ENCODE measurements at regions of chr4 and their contacts with region 1.

Region 1: DNA sequence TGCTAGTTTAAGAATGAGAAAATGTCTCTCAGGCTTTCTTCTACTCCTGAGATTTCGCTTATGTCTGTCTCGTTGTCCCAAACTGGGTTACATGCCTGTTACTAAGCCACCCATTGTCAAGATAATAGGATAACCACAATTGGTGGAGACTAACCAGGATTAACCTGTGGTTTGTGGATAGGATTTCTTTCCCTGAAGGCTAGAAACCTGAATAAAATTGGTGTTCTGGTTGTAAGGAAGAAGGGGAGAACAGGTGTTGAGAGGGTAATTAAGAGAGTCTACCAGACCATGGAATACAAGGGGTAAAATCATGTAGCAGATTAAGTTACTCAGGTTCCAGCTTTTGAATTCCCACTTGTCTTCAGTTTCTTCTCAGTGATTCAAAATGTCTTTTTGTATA is 225.4 kb downstream of the CPE start:
- DNase-seq: no peak
- H3K4me3 ChIP-seq: no peak overlapping the region
- H3K27ac ChIP-seq: no peak overlapping the region
- H3K4me1 ChIP-seq: no peaks in the 10 kb centered on the region
- H3K27me3 ChIP-seq: no peaks in the 10 kb centered on the region
- CTCF ChIP-seq: no peak

Region 2: DNA sequence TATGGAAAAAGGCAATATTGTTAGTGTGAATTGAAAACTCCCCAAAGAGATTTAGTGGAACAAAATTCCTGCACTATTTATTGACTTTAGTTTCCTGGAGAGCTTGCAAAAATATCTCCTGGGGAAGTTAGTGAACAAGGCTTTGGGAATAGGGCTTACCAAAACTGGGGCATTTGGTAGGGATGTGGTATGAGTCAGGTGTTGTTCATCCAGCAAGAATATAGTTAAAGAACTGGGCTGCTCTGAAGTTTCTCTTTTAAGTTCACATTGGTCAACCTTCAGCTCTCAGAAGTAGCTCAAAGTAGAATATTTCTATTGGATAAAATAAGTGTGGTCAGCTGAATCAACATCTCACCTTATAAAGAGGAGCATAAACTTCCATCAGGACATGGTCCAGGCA is 40.3 kb before region 1 on chr4:
- CTCF ChIA-PET with region 1: no interaction called
- POLR2A ChIA-PET with region 1: no interaction called
- intact Hi-C with region 1: loop called (anchors 2 kb)
- DNase-seq: no peak
- H3K4me3 ChIP-seq: no peak overlapping the region
- H3K27ac ChIP-seq: no peak overlapping the region
- H3K4me1 ChIP-seq: no peaks in the 10 kb centered on the region
- H3K27me3 ChIP-seq: no peaks in the 10 kb centered on the region
- CTCF ChIP-seq: no peak

Region 3: GRCh38 chr4:165656829-165657490 is 52.8 kb after region 1 on chr4:
- CTCF ChIA-PET with region 1: no interaction called
- POLR2A ChIA-PET with region 1: no interaction called
- intact Hi-C with region 1: no loop called
- DNase-seq: no peak
- H3K4me3 ChIP-seq: no peak overlapping the region
- H3K27ac ChIP-seq: no peak overlapping the region
- H3K4me1 ChIP-seq: no peaks in the 10 kb centered on the region
- H3K27me3 ChIP-seq: no peaks in the 10 kb centered on the region
- CTCF ChIP-seq: no peak

Measured in PC-9 (cell line).